WTC11 (cell line): ENCODE measurements at regions of chr5 and their contacts with region 1.

Region 1: DNA sequence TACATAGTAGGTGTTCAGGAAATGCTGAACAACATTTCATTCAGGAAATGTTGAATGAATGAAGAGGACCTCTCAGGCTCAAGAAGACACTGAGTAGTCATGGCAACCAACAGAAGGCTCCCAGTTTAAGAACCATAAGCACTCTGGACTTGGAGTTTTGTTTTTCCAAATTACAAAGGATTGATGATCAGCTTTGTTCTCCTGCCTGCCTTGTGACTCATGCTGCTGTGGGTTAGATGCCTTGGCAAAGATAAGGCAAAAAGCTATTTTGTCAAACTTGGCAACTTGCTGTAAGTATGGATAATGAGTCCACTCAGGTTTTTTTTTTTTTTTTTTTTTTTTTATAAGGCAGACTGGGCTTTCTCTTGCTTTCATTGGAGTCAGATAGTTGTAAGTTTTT is 365.0 kb downstream of the TMEM232 start:
- DNase-seq: no peak
- ATAC-seq: no peak
- H3K4me3 Mint-ChIP-seq: no peak overlapping the region
- H3K27ac Mint-ChIP-seq: no peak overlapping the region
- H3K4me1 Mint-ChIP-seq: peaks cover 10% of the 10 kb centered on the region
- H3K27me3 Mint-ChIP-seq: no peaks in the 10 kb centered on the region
- CTCF ChIP-seq: no peak

Region 2: DNA sequence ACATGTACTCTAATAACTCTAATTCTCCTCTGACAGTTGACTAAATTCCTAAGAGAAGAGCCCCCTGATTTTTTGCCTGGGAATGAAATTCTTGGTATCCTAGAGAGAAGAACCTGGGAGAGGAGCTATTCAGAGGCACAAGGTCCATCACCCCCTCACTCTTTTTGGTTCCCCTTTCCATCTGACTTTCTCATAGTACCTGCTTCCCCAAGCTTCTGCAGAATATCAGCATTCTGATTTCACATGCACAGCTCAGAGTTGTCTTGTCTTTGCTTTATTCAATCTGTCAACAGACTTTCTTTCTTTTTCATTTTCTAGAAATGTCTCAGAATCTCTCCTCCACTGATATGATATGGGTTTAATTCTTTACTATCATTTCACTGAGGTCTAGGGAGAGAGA is 1838.1 kb before region 1 on chr5:
- CTCF ChIA-PET with region 1: no interaction called
- POLR2A ChIA-PET with region 1: interaction called, 11 read pairs
- DNase-seq: no peak
- ATAC-seq: no peak
- H3K4me3 Mint-ChIP-seq: no peak overlapping the region
- H3K27ac Mint-ChIP-seq: no peak overlapping the region
- H3K4me1 Mint-ChIP-seq: peaks cover 15% of the 10 kb centered on the region
- H3K27me3 Mint-ChIP-seq: peaks cover 7% of the 10 kb centered on the region
- CTCF ChIP-seq: no peak